K562 (cell line): ENCODE measurements at regions of chr3 and their contacts with region 1.

Region 1: DNA sequence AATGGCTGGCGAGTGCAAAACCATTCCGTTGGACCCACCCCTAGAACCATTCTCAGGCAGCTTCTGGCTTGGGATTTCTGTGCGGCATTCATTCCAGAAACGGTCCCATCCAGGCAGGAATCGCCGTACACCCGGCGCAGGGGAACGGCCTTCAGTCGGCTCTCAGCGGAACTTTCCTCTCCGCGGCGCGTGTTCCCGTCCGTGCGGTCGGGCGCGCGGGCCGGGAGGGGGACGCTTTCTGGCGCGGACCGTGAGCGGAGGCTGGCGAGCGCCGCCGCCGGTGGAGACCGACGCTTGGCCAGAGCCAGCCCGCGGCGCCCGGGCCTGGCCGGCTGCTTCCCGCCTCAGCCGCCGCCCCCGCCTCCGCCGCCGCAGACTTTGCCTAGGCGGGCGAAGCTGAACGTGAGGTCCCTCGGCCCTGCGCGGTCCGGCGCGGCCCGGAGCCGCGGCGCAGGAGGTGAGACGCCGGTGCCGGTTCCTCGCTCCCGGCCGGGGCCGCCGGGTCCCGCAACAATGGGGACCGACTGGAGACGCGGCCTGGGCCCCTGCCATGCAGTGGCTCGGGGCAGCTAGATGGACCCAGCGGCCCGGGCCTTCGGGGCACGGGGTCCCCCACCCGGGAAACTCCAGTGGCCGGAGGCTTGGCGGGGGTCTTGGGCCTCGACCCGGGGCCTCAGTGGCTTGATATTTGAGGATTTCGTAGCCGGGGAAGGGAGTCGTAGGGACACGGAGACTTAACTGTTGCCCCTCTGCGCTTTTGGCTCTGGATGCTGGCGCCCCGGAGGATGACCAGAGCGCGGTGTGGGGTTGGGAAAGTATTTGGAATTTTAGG is at the start of gene RAD54L2:
- DNase-seq: peak; percentile 80 to 85 (median 84)
- ATAC-seq: peak; percentile 96
- H3K4me3 ChIP-seq: peak within 1 kb of the TSS; percentile 91
- H3K27ac ChIP-seq: peak within 1 kb of the TSS; percentile 82
- H3K4me1 ChIP-seq: peaks cover 5 to 16% of the 10 kb centered on the region in 2 experiments; a peak in 3 of 5 replicates
- H3K27me3 ChIP-seq: no peaks in the 10 kb centered on the region
- CTCF ChIP-seq: no peak
- EP300 ChIP-seq: peak; percentile 31; the same call in 1 of the 2 replicates
- POLR2A ChIP-seq: peak; percentile 71
- RAD21 ChIP-seq: no peak
- polyA plus RNA-seq, gene RAD54L2: 1.3 to 2.4 TPM

Region 2: DNA sequence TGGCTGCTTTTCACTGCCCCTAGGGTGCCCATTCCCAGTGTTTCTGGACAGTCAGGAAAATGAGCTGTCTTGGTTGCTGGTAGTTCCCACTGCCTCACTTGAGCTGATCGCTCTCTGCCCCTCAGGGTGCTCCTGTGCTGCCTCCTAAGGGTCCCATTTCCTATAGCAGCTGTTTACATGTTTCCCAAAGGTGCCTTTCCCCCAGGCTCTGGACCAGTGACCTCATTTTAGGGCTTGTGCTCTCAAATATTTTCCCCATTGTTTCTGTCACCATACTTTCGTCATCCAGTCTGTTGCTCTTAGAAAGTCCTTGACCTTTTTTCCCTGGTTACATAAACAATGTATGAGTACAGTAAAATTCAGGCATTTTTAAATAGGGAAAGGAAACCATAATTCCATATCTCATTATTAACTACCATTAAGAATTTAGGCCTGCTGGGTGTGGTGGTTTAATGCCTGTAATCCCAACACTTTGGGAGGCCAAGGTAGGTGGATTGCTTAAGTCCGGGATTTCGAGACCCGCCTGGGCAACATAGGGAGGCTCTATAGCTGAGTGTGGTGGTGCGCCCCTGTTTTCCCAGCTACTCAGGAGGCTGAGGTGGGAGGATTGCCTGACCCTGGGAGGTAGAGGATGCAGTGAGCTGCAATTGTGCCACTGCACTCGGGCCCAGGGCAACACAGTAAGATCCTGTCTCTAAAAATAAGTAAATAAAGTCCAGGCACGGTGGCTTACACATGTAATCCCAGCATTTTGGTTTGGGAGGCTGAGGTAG is 11.6 kb after region 1 on chr3:
- CTCF ChIA-PET with region 1: no interaction called
- POLR2A ChIA-PET with region 1: interaction called, 12 read pairs
- in situ Hi-C with region 1: no loop called
- intact Hi-C with region 1: no loop called
- DNase-seq: no peak
- ATAC-seq: no peak; the same call in 2 of the 3 replicates
- H3K4me3 ChIP-seq: no peak overlapping the region
- H3K27ac ChIP-seq: no peak overlapping the region
- H3K4me1 ChIP-seq: no peaks in the 10 kb centered on the region
- H3K27me3 ChIP-seq: no peaks in the 10 kb centered on the region
- CTCF ChIP-seq: no peak
- EP300 ChIP-seq: no peak
- POLR2A ChIP-seq: no peak
- RAD21 ChIP-seq: no peak